ENCODE measurements at regions of chrX and their contacts with region 1.

Region 1: GRCh38 chrX:47619486-47620302 is at the start of gene SYN1:
- DNase-seq: peak; percentile 63 to 93 (median 83)
- ATAC-seq: peak; percentile 89
- H3K4me3 ChIP-seq: peak within 1 kb of the TSS; percentile 39 to 41
- H3K4me3 Mint-ChIP-seq: peak within 1 kb of the TSS; percentile 46
- H3K27ac ChIP-seq: no peak within 1 kb of the TSS
- H3K27ac Mint-ChIP-seq: no peak within 1 kb of the TSS
- H3K4me1 ChIP-seq: peaks cover 10% of the 10 kb centered on the region
- H3K4me1 Mint-ChIP-seq: peaks cover 21% of the 10 kb centered on the region
- H3K27me3 ChIP-seq: no peaks in the 10 kb centered on the region
- H3K27me3 Mint-ChIP-seq: peaks cover 8% of the 10 kb centered on the region
- CTCF ChIP-seq: no peak
- total RNA-seq, gene SYN1: 0.17 TPM in 1 of 2 experiments, not detected in the other

Region 2: GRCh38 chrX:47581731-47582647 is 37.7 kb before region 1 on chrX and contains the start of gene TIMP1:
- CTCF ChIA-PET with region 1: no interaction called
- POLR2A ChIA-PET with region 1: no interaction called
- intact Hi-C with region 1: loop called (anchors 2 to 5 kb)
- DNase-seq: peak; percentile 31 to 87 (median 79)
- ATAC-seq: peak; percentile 95
- H3K4me3 ChIP-seq: peak within 1 kb of the TSS; percentile 40 to 50
- H3K4me3 Mint-ChIP-seq: peak within 1 kb of the TSS; percentile 76
- H3K27ac ChIP-seq: peak within 1 kb of the TSS; percentile 47 to 59
- H3K27ac Mint-ChIP-seq: peak within 1 kb of the TSS; percentile 87
- H3K4me1 ChIP-seq: peaks cover 10% of the 10 kb centered on the region
- H3K4me1 Mint-ChIP-seq: peaks cover 32% of the 10 kb centered on the region
- H3K27me3 ChIP-seq: no peaks in the 10 kb centered on the region
- H3K27me3 Mint-ChIP-seq: no peaks in the 10 kb centered on the region
- CTCF ChIP-seq: no peak
- total RNA-seq, gene TIMP1: 16.1 to 17.4 TPM

Region 3: GRCh38 chrX:48761674-48762471 is 1142.2 kb after region 1 on chrX and contains the start of gene GLOD5:
- CTCF ChIA-PET with region 1: no interaction called
- POLR2A ChIA-PET with region 1: no interaction called
- intact Hi-C with region 1: no loop called
- DNase-seq: no peak
- ATAC-seq: no peak
- H3K4me3 ChIP-seq: no peak within 1 kb of the TSS
- H3K4me3 Mint-ChIP-seq: no peak within 1 kb of the TSS
- H3K27ac ChIP-seq: no peak within 1 kb of the TSS
- H3K27ac Mint-ChIP-seq: no peak within 1 kb of the TSS
- H3K4me1 ChIP-seq: no peaks in the 10 kb centered on the region
- H3K4me1 Mint-ChIP-seq: peaks cover 3% of the 10 kb centered on the region
- H3K27me3 ChIP-seq: no peaks in the 10 kb centered on the region
- H3K27me3 Mint-ChIP-seq: no peaks in the 10 kb centered on the region
- CTCF ChIP-seq: no peak
- total RNA-seq, gene GLOD5: not detected

Measured in CD8-positive, alpha-beta T cell (primary cell).